CD4-positive, alpha-beta memory T cell (primary cell): ENCODE measurements at regions of chr5 and their contacts with region 1.

Region 1: GRCh38 chr5:123545506-123545905 is 33.5 kb downstream of the CSNK1G3 start:
- DNase-seq: peak in 4 of 5 donors; percentile 10 to 41 (median 22)
- H3K4me3 ChIP-seq: no peak overlapping the region
- H3K4me3 Mint-ChIP-seq: no peak overlapping the region
- H3K27ac ChIP-seq: no peak overlapping the region
- H3K27ac Mint-ChIP-seq: peak overlapping the region in 3 of 7 donors; percentile 8 to 58 (median 32)
- H3K4me1 ChIP-seq: peaks cover 39% of the 10 kb centered on the region
- H3K4me1 Mint-ChIP-seq: peaks cover 39 to 66% (median 52%) of the 10 kb centered on the region in 4 donors
- H3K27me3 ChIP-seq: no peaks in the 10 kb centered on the region
- H3K27me3 Mint-ChIP-seq: no peaks in the 10 kb centered on the region

Region 2: DNA sequence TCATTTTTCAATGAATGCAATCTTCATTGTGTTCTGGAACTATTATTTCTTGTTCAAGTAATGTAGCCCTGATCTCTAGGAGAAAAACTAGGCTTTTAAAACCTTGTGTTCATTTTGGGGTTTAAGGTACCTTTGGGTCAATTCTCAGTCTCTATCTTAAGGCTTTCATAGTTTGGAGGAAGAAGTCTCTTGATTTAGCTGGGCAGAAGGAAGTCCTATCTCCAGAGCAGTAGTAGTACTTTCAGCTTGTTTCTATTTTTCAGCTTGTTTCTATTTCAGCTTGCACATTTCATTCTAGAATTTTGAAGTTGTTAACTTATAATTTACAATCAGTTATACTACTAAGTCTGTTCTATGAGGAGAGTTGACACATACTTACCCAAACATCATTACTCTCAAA is 18.3 kb before region 1 on chr5:
- CTCF ChIA-PET with region 1: no interaction called
- POLR2A ChIA-PET with region 1: interaction called, 3 read pairs
- intact Hi-C with region 1: loop called (anchors 2 kb)
- DNase-seq: no peak
- H3K4me3 ChIP-seq: no peak overlapping the region
- H3K4me3 Mint-ChIP-seq: peak overlapping the region in 3 of 8 donors; percentile 4 to 47 (median 8)
- H3K27ac ChIP-seq: no peak overlapping the region
- H3K27ac Mint-ChIP-seq: peak overlapping the region in 1 of 7 donors; percentile 6
- H3K4me1 ChIP-seq: peaks cover 12% of the 10 kb centered on the region
- H3K4me1 Mint-ChIP-seq: peaks cover 35 to 69% (median 36%) of the 10 kb centered on the region in 4 donors
- H3K27me3 ChIP-seq: no peaks in the 10 kb centered on the region
- H3K27me3 Mint-ChIP-seq: no peaks in the 10 kb centered on the region

Region 3: DNA sequence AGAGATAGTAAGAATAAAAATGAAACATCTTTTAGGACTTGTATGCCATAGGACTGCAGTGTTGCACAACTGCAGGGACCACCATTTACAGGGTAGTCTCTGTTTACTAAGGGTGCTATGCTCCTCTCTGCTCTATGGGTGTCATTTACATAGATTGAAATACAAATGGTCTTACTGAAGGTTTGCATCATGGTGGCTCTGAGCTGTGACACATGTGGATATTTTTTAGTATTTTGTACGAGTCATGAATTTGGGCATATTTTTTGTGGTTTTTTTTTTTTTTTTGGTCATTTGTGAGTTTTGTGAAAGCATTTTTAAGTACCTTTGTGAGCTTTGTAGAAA is 13.9 kb after region 1 on chr5:
- CTCF ChIA-PET with region 1: interaction called, 3 read pairs
- POLR2A ChIA-PET with region 1: interaction called, 5 read pairs
- intact Hi-C with region 1: loop called (anchors 2 kb)
- DNase-seq: no peak
- H3K4me3 ChIP-seq: no peak overlapping the region
- H3K4me3 Mint-ChIP-seq: no peak overlapping the region
- H3K27ac ChIP-seq: no peak overlapping the region
- H3K27ac Mint-ChIP-seq: no peak overlapping the region
- H3K4me1 ChIP-seq: no peaks in the 10 kb centered on the region
- H3K4me1 Mint-ChIP-seq: peaks cover 5 to 24% (median 11%) of the 10 kb centered on the region in 4 donors
- H3K27me3 ChIP-seq: no peaks in the 10 kb centered on the region
- H3K27me3 Mint-ChIP-seq: no peaks in the 10 kb centered on the region